Panc1 (cell line): ENCODE measurements at regions of chr2 and their contacts with region 1.

Region 1: GRCh38 chr2:172102391-172103278 is at the start of gene DLX2:
- DNase-seq: no peak
- ATAC-seq: peak; percentile 74
- H3K4me3 ChIP-seq: peak within 1 kb of the TSS; percentile 64 to 92
- H3K27ac ChIP-seq: peak within 1 kb of the TSS; percentile 65
- H3K4me1 ChIP-seq: peaks cover 30% of the 10 kb centered on the region
- H3K27me3 ChIP-seq: no peaks in the 10 kb centered on the region
- CTCF ChIP-seq: no peak
- total RNA-seq, gene DLX2: 4.4 TPM

Region 2: GRCh38 chr2:171598713-171599319 is 503.8 kb before region 1 on chr2:
- CTCF ChIA-PET with region 1: no interaction called
- POLR2A ChIA-PET with region 1: no interaction called
- in situ Hi-C with region 1: no loop called
- intact Hi-C with region 1: loop called (anchors 5 kb)
- DNase-seq: peak; percentile 45
- ATAC-seq: peak; percentile 99
- H3K4me3 ChIP-seq: no peak overlapping the region
- H3K27ac ChIP-seq: no peak overlapping the region
- H3K4me1 ChIP-seq: no peaks in the 10 kb centered on the region
- H3K27me3 ChIP-seq: no peaks in the 10 kb centered on the region
- CTCF ChIP-seq: peak; percentile 84

Region 3: DNA sequence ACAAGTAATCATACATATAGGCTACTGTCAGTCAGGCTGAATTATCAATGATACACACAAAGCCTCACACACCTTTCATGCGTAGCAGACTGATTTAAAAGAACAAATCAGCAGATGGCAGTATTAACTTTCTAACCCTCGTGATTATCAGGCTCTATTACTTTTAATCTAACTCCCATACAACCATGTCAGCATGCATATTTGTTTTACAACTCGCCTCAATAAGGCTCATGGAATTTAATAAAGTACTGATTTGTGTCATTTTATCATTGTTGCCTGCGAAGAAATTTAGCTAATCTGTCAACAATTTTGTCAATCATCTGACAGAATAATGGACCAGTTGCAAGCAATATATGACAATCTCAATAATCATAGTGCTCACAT is 291.4 kb before region 1 on chr2:
- CTCF ChIA-PET with region 1: interaction called, 9 read pairs
- POLR2A ChIA-PET with region 1: no interaction called
- in situ Hi-C with region 1: no loop called
- intact Hi-C with region 1: loop called (anchors 2 kb)
- DNase-seq: peak; percentile 7
- ATAC-seq: peak; percentile 76
- H3K4me3 ChIP-seq: no peak overlapping the region
- H3K27ac ChIP-seq: no peak overlapping the region
- H3K4me1 ChIP-seq: no peaks in the 10 kb centered on the region
- H3K27me3 ChIP-seq: no peaks in the 10 kb centered on the region
- CTCF ChIP-seq: peak; percentile 58; the same call in 1 of the 2 replicates

Region 4: GRCh38 chr2:171999604-172000469 is 102.8 kb before region 1 on chr2 and contains the start of gene METAP1D:
- CTCF ChIA-PET with region 1: no interaction called
- POLR2A ChIA-PET with region 1: no interaction called
- in situ Hi-C with region 1: no loop called
- intact Hi-C with region 1: loop called (anchors 10 kb)
- DNase-seq: peak; percentile 73
- ATAC-seq: peak; percentile 98
- H3K4me3 ChIP-seq: peak within 1 kb of the TSS; percentile 82 to 97
- H3K27ac ChIP-seq: peak within 1 kb of the TSS; percentile 96
- H3K4me1 ChIP-seq: peaks cover 7% of the 10 kb centered on the region
- H3K27me3 ChIP-seq: no peaks in the 10 kb centered on the region
- CTCF ChIP-seq: no peak
- total RNA-seq, gene METAP1D: 8.6 TPM

Region 5: DNA sequence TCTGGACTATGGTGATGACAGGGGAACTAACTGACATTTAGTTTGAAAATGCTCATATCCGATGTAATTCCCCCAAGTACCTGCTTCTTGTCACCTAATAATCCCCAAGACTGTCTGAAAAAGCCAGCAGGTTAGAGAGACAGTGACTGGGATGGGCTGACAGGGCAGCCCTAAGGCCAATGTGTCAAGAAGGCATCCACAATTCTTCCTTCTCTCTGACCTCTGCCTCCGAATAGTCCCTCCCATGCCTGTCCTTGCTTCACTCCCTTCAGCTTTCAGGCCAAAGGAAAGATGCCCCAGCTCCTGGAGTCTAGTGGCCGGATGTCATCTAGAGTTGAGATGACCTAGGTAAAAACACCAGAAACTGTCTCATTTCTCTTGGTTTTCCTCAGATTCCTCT is 77.7 kb after region 1 on chr2:
- CTCF ChIA-PET with region 1: no interaction called
- POLR2A ChIA-PET with region 1: interaction called, 10 read pairs
- in situ Hi-C with region 1: no loop called
- intact Hi-C with region 1: no loop called
- DNase-seq: no peak
- ATAC-seq: no peak
- H3K4me3 ChIP-seq: no peak overlapping the region
- H3K27ac ChIP-seq: no peak overlapping the region
- H3K4me1 ChIP-seq: no peaks in the 10 kb centered on the region; the same call in 1 of the 2 replicates
- H3K27me3 ChIP-seq: no peaks in the 10 kb centered on the region
- CTCF ChIP-seq: no peak